Ascending aorta (tissue), 2 donors: ENCODE measurements at regions of chr2 and their contacts with region 1.

Region 1: DNA sequence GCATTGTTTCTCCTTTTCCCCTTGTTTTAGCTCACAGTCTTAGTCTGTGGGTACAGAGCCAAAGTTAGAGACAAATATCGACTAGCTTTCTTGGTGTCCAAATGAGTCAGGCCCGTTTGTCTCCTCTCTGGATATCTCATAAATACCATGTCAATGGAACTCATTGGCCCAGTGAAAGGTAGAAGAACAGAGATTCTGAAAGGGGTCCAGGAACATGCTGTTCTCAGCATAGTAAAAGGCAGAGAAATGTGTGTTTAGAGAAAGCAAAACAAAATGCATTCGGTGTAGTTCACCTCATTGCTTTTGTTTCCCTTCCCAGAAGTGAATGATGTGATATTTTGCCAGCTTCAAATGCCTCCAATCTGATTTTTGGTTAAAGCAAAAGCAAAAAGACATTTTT is 238.6 kb upstream of the SLC8A1 start:
- DNase-seq: no peak
- H3K4me3 ChIP-seq: no peak overlapping the region
- H3K27ac ChIP-seq: peak overlapping the region in 1 of 2 donors; percentile 24
- H3K4me1 ChIP-seq: no peaks in the 10 kb centered on the region
- H3K27me3 ChIP-seq: no peaks in the 10 kb centered on the region
- CTCF ChIP-seq: no peak

Region 2: DNA sequence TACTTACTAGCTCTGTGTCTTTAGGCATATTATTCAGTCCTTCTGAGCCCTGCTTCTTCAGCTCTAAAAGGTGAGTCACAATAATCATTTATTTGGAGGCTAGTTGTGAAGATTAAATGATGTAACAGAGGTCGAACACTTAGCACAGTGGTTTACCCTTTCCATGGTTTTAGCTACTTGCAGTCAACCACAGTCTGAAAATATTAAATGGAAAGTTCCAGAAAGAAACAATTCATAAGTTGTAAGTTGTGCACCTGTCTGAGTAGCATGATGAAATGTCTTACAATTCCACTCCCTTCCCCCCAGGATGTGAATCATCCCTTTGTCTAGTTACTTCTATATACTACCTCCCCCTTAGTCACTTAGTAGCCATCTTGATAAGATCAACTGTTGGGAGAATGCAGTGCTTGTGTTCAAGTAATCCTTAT is 693.9 kb before region 1 on chr2:
- intact Hi-C with region 1: loop called (anchors 10 kb)
- DNase-seq: no peak
- H3K4me3 ChIP-seq: no peak overlapping the region
- H3K27ac ChIP-seq: no peak overlapping the region
- H3K4me1 ChIP-seq: no peaks in the 10 kb centered on the region
- H3K27me3 ChIP-seq: no peaks in the 10 kb centered on the region
- CTCF ChIP-seq: no peak